ENCODE measurements at regions of chr12 and their contacts with region 1.

Region 1: GRCh38 chr12:118035246-118036041 is 18.9 kb downstream of the RFC5 start:
- DNase-seq: no peak
- ATAC-seq: no peak
- H3K4me3 ChIP-seq: no peak overlapping the region
- H3K4me3 Mint-ChIP-seq: no peak overlapping the region
- H3K27ac ChIP-seq: peak overlapping the region in 1 of 2 donors; percentile 12
- H3K27ac Mint-ChIP-seq: peak overlapping the region; percentile 72
- H3K4me1 ChIP-seq: peaks cover 8 to 10% of the 10 kb centered on the region in 2 donors
- H3K4me1 Mint-ChIP-seq: peaks cover 15% of the 10 kb centered on the region
- H3K27me3 ChIP-seq: no peaks in the 10 kb centered on the region
- H3K27me3 Mint-ChIP-seq: no peaks in the 10 kb centered on the region
- CTCF ChIP-seq: no peak

Region 2: GRCh38 chr12:117874842-117875434 is 160.5 kb before region 1 on chr12:
- CTCF ChIA-PET with region 1: interaction called, 9 read pairs
- POLR2A ChIA-PET with region 1: no interaction called
- intact Hi-C with region 1: loop called (anchors 10 kb)
- DNase-seq: peak; percentile 56
- ATAC-seq: peak; percentile 36
- H3K4me3 ChIP-seq: no peak overlapping the region
- H3K4me3 Mint-ChIP-seq: no peak overlapping the region
- H3K27ac ChIP-seq: no peak overlapping the region
- H3K27ac Mint-ChIP-seq: peak overlapping the region; percentile 68
- H3K4me1 ChIP-seq: peaks cover 0 to 6% of the 10 kb centered on the region in 2 donors
- H3K4me1 Mint-ChIP-seq: peaks cover 5% of the 10 kb centered on the region
- H3K27me3 ChIP-seq: peaks cover 0 to 16% (median 7%) of the 10 kb centered on the region in 4 experiments
- H3K27me3 Mint-ChIP-seq: peaks cover 25% of the 10 kb centered on the region
- CTCF ChIP-seq: peak; percentile 87

Region 3: GRCh38 chr12:118016424-118017264 is 18.8 kb before region 1 on chr12 and contains the start of gene RFC5:
- CTCF ChIA-PET with region 1: no interaction called
- POLR2A ChIA-PET with region 1: no interaction called
- intact Hi-C with region 1: no loop called
- DNase-seq: peak; percentile 98
- ATAC-seq: peak; percentile 98
- H3K4me3 ChIP-seq: peak within 1 kb of the TSS; percentile 51 to 92 (median 81)
- H3K4me3 Mint-ChIP-seq: peak within 1 kb of the TSS; percentile 91
- H3K27ac ChIP-seq: peak within 1 kb of the TSS in 1 of 2 donors; percentile 71
- H3K27ac Mint-ChIP-seq: peak within 1 kb of the TSS; percentile 95
- H3K4me1 ChIP-seq: peaks cover 11 to 16% of the 10 kb centered on the region in 2 donors
- H3K4me1 Mint-ChIP-seq: peaks cover 16% of the 10 kb centered on the region
- H3K27me3 ChIP-seq: no peaks in the 10 kb centered on the region
- H3K27me3 Mint-ChIP-seq: no peaks in the 10 kb centered on the region
- CTCF ChIP-seq: no peak
- total RNA-seq, gene RFC5: 15.0 and 22.7 TPM in 2 replicates

Region 4: GRCh38 chr12:118073768-118074167 is 38.3 kb after region 1 on chr12:
- CTCF ChIA-PET with region 1: no interaction called
- POLR2A ChIA-PET with region 1: no interaction called
- intact Hi-C with region 1: no loop called
- DNase-seq: no peak
- ATAC-seq: no peak
- H3K4me3 ChIP-seq: no peak overlapping the region
- H3K4me3 Mint-ChIP-seq: no peak overlapping the region
- H3K27ac ChIP-seq: no peak overlapping the region
- H3K27ac Mint-ChIP-seq: no peak overlapping the region
- H3K4me1 ChIP-seq: no peaks in the 10 kb centered on the region
- H3K4me1 Mint-ChIP-seq: no peaks in the 10 kb centered on the region
- H3K27me3 ChIP-seq: peaks cover 0 to 1% (median 0%) of the 10 kb centered on the region in 4 experiments
- H3K27me3 Mint-ChIP-seq: no peaks in the 10 kb centered on the region
- CTCF ChIP-seq: no peak

Region 5: GRCh38 chr12:118089782-118090181 is 54.3 kb after region 1 on chr12:
- CTCF ChIA-PET with region 1: no interaction called
- POLR2A ChIA-PET with region 1: no interaction called
- intact Hi-C with region 1: no loop called
- DNase-seq: no peak
- ATAC-seq: no peak
- H3K4me3 ChIP-seq: no peak overlapping the region
- H3K4me3 Mint-ChIP-seq: no peak overlapping the region
- H3K27ac ChIP-seq: no peak overlapping the region
- H3K27ac Mint-ChIP-seq: no peak overlapping the region
- H3K4me1 ChIP-seq: no peaks in the 10 kb centered on the region
- H3K4me1 Mint-ChIP-seq: no peaks in the 10 kb centered on the region
- H3K27me3 ChIP-seq: no peaks in the 10 kb centered on the region
- H3K27me3 Mint-ChIP-seq: no peaks in the 10 kb centered on the region
- CTCF ChIP-seq: no peak

Measured in B cell (primary cell).